Activated B cell treated with CpG ODN at 0.5 μM for 24 hours (primary cell): ENCODE measurements at regions of chr14 and their contacts with region 1.

Region 1: DNA sequence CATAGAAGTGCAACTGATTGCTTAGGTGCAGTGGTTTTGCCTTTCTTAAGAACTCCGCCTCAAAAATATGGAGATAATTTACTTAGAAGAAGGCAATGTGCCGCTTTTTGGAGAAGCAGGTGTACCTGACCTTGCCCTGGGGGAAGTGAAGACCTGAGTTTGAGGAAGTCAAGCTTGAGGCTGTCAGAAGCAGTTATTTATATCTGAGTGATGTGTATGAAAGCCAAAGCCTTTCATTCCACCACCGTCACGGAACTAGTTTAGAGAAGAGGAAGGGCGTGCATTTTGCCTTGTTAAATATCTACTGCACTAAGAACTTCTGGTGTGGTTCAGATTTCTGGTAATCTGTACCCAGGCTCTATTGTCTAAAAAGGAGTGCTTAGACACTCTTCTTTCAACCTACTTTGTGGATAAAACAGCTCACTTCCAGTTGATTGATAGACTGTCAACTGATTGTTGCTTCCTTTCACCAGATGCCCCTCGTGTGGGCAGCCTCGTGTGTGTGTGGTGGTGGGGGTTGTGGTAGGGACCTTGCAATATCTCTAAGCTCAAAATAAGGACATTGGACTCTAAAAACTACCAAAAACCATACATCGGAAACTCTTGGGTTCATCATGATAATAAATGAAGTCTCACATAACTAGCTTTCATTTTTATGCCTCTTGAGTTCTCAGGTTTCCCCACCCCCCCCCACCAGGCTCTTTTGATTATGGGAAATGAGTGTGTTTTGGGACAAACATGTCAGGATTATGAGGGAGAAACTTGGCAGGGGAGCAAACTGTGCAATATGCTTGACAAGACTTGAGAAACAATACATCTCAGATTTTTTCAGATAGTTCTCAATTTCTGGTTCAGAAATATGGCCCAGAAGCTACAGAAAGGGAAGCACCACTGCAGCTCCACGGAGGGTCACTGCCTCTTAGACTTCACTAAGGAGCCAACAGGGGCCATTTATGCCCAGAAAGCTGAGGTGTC is 78.6 kb downstream of the ARF6 start:
- DNase-seq: no peak
- ATAC-seq: peak; percentile 90
- H3K4me3 Mint-ChIP-seq: peak overlapping the region; percentile 44
- H3K27ac Mint-ChIP-seq: peak overlapping the region; percentile 96
- H3K4me1 Mint-ChIP-seq: peaks cover 70% of the 10 kb centered on the region
- H3K27me3 Mint-ChIP-seq: no peaks in the 10 kb centered on the region
- CTCF ChIP-seq: no peak

Region 2: GRCh38 chr14:49879683-49880204 is 91.7 kb before region 1 on chr14:
- CTCF ChIA-PET with region 1: interaction called, 3 read pairs
- POLR2A ChIA-PET with region 1: interaction called, 12 read pairs
- intact Hi-C with region 1: no loop called
- DNase-seq: no peak
- ATAC-seq: peak; percentile 90
- H3K4me3 Mint-ChIP-seq: no peak overlapping the region
- H3K27ac Mint-ChIP-seq: peak overlapping the region; percentile 47
- H3K4me1 Mint-ChIP-seq: peaks cover 14% of the 10 kb centered on the region
- H3K27me3 Mint-ChIP-seq: no peaks in the 10 kb centered on the region
- CTCF ChIP-seq: no peak

Region 3: GRCh38 chr14:49930720-49931119 is 40.7 kb before region 1 on chr14:
- CTCF ChIA-PET with region 1: no interaction called
- POLR2A ChIA-PET with region 1: interaction called, 16 read pairs
- intact Hi-C with region 1: loop called (anchors 1 kb)
- DNase-seq: no peak
- ATAC-seq: no peak
- H3K4me3 Mint-ChIP-seq: peak overlapping the region; percentile 40
- H3K27ac Mint-ChIP-seq: peak overlapping the region; percentile 88
- H3K4me1 Mint-ChIP-seq: peaks cover 34% of the 10 kb centered on the region
- H3K27me3 Mint-ChIP-seq: no peaks in the 10 kb centered on the region
- CTCF ChIP-seq: no peak

Region 4: GRCh38 chr14:49992901-49993335 is 21.5 kb after region 1 on chr14:
- CTCF ChIA-PET with region 1: interaction called, 3 read pairs
- POLR2A ChIA-PET with region 1: interaction called, 45 read pairs
- intact Hi-C with region 1: no loop called
- DNase-seq: no peak
- ATAC-seq: peak; percentile 88
- H3K4me3 Mint-ChIP-seq: peak overlapping the region; percentile 73
- H3K27ac Mint-ChIP-seq: peak overlapping the region; percentile 90
- H3K4me1 Mint-ChIP-seq: peaks cover 36% of the 10 kb centered on the region
- H3K27me3 Mint-ChIP-seq: no peaks in the 10 kb centered on the region
- CTCF ChIP-seq: no peak

Region 5: GRCh38 chr14:50085570-50086320 is 114.3 kb after region 1 on chr14:
- CTCF ChIA-PET with region 1: interaction called, 3 read pairs
- POLR2A ChIA-PET with region 1: interaction called, 25 read pairs
- intact Hi-C with region 1: loop called (anchors 1 kb)
- DNase-seq: peak; percentile 44
- ATAC-seq: peak; percentile 75
- H3K4me3 Mint-ChIP-seq: peak overlapping the region; percentile 68
- H3K27ac Mint-ChIP-seq: peak overlapping the region; percentile 97
- H3K4me1 Mint-ChIP-seq: peaks cover 92% of the 10 kb centered on the region
- H3K27me3 Mint-ChIP-seq: no peaks in the 10 kb centered on the region
- CTCF ChIP-seq: no peak

Region 6: GRCh38 chr14:50231475-50232275 is 260.2 kb after region 1 on chr14 and contains the start of gene SOS2:
- CTCF ChIA-PET with region 1: no interaction called
- POLR2A ChIA-PET with region 1: no interaction called
- intact Hi-C with region 1: loop called (anchors 10 kb)
- DNase-seq: peak; percentile 87
- ATAC-seq: peak; percentile 87
- H3K4me3 Mint-ChIP-seq: peak within 1 kb of the TSS; percentile 93
- H3K27ac Mint-ChIP-seq: peak within 1 kb of the TSS; percentile 92
- H3K4me1 Mint-ChIP-seq: peaks cover 35% of the 10 kb centered on the region
- H3K27me3 Mint-ChIP-seq: no peaks in the 10 kb centered on the region
- CTCF ChIP-seq: no peak
- total RNA-seq, gene SOS2: 29.1 and 32.0 TPM in 2 replicates